CD4-positive, alpha-beta T cell (primary cell): ENCODE measurements at regions of chr11 and their contacts with region 1.

Region 1: GRCh38 chr11:118227865-118228785 is 3.3 kb upstream of the JAML start:
- DNase-seq: peak in 4 of 14 experiments; percentile 35 to 79 (median 70)
- ATAC-seq: peak; percentile 13
- H3K4me3 ChIP-seq: no peak overlapping the region
- H3K4me3 Mint-ChIP-seq: peak overlapping the region; percentile 76
- H3K27ac ChIP-seq: peak overlapping the region; percentile 54 to 68
- H3K27ac Mint-ChIP-seq: no peak overlapping the region
- H3K4me1 ChIP-seq: peaks cover 60% of the 10 kb centered on the region
- H3K4me1 Mint-ChIP-seq: peaks cover 33% of the 10 kb centered on the region
- H3K27me3 ChIP-seq: no peaks in the 10 kb centered on the region
- H3K27me3 Mint-ChIP-seq: no peaks in the 10 kb centered on the region
- CTCF ChIP-seq: no peak

Region 2: DNA sequence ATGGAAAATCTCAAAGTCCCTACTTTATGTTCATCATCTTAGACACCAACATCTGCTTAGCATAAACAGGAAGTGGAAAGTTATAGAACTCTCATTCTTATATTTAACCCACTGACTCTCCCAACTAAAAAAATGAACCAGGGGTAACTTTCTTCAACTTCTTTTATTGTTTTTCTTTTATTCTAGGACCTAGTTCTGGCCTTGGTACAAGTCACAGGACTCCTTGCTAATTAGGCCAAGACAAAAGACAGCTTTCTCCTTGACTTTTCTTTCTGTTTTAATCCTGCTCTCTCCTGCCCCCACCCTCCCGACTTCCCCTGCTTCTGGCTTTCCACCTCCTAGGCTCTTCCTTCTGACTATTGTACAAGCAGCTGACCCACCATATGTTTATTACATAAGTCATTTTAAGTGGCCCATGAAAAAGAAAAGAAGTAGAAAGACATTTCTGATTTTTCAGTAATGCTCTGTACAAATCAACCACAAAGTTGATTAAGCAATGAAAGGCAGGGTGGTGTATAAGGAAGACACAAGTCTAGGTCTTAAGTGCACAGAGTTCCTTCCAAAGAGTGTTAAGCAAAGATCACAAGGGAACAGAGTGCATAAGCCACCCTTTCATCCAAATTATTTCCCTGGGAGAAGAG is 21.6 kb before region 1 on chr11:
- CTCF ChIA-PET with region 1: interaction called, 3 read pairs
- POLR2A ChIA-PET with region 1: interaction called, 13 read pairs
- intact Hi-C with region 1: loop called in 1 of 2 experiments (anchors 2 kb)
- DNase-seq: peak in 1 of 14 experiments; percentile 49
- ATAC-seq: no peak
- H3K4me3 ChIP-seq: no peak overlapping the region
- H3K4me3 Mint-ChIP-seq: peak overlapping the region; percentile 75
- H3K27ac ChIP-seq: peak overlapping the region in 1 of 2 donors; percentile 15
- H3K27ac Mint-ChIP-seq: peak overlapping the region; percentile 74
- H3K4me1 ChIP-seq: peaks cover 54% of the 10 kb centered on the region
- H3K4me1 Mint-ChIP-seq: peaks cover 8% of the 10 kb centered on the region
- H3K27me3 ChIP-seq: no peaks in the 10 kb centered on the region
- H3K27me3 Mint-ChIP-seq: no peaks in the 10 kb centered on the region
- CTCF ChIP-seq: no peak

Region 3: DNA sequence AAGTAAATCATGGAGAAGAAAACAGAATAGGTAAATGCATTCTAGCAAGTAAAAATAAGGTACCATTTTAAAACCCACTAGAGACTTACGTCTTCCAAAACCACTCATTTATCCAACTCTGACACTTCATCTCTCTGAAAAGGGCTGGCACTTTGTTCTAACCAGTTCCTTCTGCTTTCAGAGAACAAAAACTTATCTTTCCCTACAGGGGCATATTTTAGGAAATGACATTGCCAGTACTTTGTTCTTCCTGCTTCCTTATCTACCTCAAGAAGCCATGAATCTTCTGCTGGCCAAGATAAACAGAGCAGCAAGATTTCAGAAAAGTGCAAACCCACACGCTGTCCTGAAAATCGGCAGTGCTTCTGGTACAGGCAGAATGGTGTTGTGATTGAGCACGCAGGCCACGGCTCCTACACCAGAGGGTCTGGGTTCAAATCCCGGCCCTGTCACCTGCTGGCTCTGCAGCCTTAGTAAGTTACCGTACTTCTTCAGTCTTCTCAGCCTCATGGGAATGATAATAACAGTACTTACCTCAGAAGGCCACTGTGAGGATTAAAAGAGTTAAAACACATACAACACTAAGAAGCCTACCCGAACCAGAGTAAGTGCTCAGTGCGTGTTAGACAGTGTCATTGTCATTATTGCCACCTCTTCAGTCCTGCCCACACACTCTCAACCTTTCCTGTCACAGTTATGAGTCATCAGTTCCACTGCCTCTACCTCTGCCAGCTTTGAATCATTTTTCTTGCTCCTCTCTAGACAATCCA is 13.1 kb after region 1 on chr11:
- CTCF ChIA-PET with region 1: interaction called, 6 read pairs
- POLR2A ChIA-PET with region 1: interaction called, 78 read pairs
- intact Hi-C with region 1: loop called (anchors 2 kb)
- DNase-seq: peak in 11 of 14 experiments; percentile 22 to 90 (median 55)
- ATAC-seq: peak; percentile 96
- H3K4me3 ChIP-seq: peak overlapping the region; percentile 21
- H3K4me3 Mint-ChIP-seq: peak overlapping the region; percentile 71
- H3K27ac ChIP-seq: peak overlapping the region; percentile 42 to 79
- H3K27ac Mint-ChIP-seq: peak overlapping the region; percentile 89
- H3K4me1 ChIP-seq: peaks cover 49% of the 10 kb centered on the region
- H3K4me1 Mint-ChIP-seq: peaks cover 70% of the 10 kb centered on the region
- H3K27me3 ChIP-seq: no peaks in the 10 kb centered on the region
- H3K27me3 Mint-ChIP-seq: no peaks in the 10 kb centered on the region
- CTCF ChIP-seq: no peak

Region 4: DNA sequence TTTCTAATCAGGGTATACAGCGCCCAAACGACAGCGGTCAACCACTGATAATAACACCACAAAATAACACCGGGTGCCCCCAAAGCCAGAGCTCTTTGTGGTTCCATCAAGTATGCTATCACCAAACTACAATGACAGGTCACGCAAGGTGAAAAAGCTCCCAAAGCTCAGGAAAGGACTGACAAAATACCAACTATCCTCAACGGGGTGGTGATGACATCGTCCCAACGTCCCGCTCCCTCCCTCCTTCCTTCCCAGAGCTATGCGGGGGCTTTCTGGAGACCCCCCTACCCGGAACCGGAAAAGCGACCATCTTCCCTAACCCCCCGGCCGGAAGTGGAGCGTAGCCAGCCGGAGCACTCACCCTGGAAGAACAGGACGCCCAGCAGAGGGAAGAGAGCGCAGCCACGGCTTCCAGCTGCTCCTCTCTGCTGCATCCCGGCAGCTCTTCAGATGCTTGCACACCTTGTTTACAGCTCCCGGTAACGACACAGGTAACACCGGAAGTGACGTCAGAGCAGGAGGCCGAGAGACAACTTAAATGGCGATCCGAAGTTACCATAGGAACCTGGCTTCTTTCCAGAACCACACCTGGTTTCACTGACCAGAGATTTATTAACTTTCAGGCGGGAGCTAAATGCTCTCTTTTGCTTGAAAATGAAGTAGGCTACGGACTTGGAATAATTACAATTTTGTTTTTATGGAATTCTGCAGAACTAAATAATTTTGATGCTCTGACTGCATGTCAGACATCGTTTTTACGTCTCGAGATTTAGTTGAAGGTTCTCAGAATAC is 23.9 kb after region 1 on chr11 and contains the start of gene MPZL3:
- CTCF ChIA-PET with region 1: interaction called, 7 read pairs
- POLR2A ChIA-PET with region 1: interaction called, 49 read pairs
- intact Hi-C with region 1: loop called (anchors 1 to 2 kb)
- DNase-seq: peak; percentile 72 to 96 (median 79)
- ATAC-seq: peak; percentile 86
- H3K4me3 ChIP-seq: peak within 1 kb of the TSS; percentile 79
- H3K4me3 Mint-ChIP-seq: peak within 1 kb of the TSS; percentile 96
- H3K27ac ChIP-seq: peak within 1 kb of the TSS; percentile 91 to 94
- H3K27ac Mint-ChIP-seq: peak within 1 kb of the TSS; percentile 98
- H3K4me1 ChIP-seq: peaks cover 13% of the 10 kb centered on the region
- H3K4me1 Mint-ChIP-seq: peaks cover 49% of the 10 kb centered on the region
- H3K27me3 ChIP-seq: no peaks in the 10 kb centered on the region
- H3K27me3 Mint-ChIP-seq: no peaks in the 10 kb centered on the region
- CTCF ChIP-seq: no peak
- total RNA-seq, gene MPZL3: 29.0 to 30.2 TPM

Region 5: GRCh38 chr11:118295834-118296454 is 67.8 kb after region 1 on chr11:
- CTCF ChIA-PET with region 1: interaction called, 5 read pairs
- POLR2A ChIA-PET with region 1: interaction called, 13 read pairs
- intact Hi-C with region 1: no loop called
- DNase-seq: peak in 12 of 14 experiments; percentile 23 to 81 (median 45)
- ATAC-seq: peak; percentile 85
- H3K4me3 ChIP-seq: no peak overlapping the region
- H3K4me3 Mint-ChIP-seq: no peak overlapping the region
- H3K27ac ChIP-seq: no peak overlapping the region
- H3K27ac Mint-ChIP-seq: peak overlapping the region; percentile 29
- H3K4me1 ChIP-seq: peaks cover 12% of the 10 kb centered on the region
- H3K4me1 Mint-ChIP-seq: peaks cover 36% of the 10 kb centered on the region
- H3K27me3 ChIP-seq: no peaks in the 10 kb centered on the region
- H3K27me3 Mint-ChIP-seq: no peaks in the 10 kb centered on the region
- CTCF ChIP-seq: peak; percentile 76

Region 6: DNA sequence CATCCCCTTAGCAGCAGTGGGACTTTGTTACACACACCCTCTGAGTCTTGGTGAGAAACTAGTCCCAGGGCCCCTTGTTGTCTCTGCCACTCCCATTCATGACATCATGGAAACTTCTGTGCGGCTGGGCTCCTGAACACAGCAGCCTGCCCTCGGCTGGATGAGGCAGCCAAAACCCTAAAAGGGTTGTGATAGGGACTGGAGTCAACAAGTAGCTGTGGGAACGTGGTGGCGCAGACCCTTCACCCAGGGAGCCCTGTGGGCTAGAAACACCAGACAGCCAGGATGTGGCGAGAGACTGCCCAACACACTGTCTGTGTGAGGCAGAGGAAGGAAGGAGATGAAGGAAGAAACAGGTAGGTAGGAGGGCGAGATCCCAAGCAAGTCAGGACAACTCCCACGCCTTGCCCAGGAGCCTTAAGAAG is 110.5 kb after region 1 on chr11:
- CTCF ChIA-PET with region 1: no interaction called
- POLR2A ChIA-PET with region 1: interaction called, 9 read pairs
- intact Hi-C with region 1: loop called in 1 of 2 experiments (anchors 2 kb)
- DNase-seq: peak; percentile 61 to 96 (median 86)
- ATAC-seq: peak; percentile 66
- H3K4me3 ChIP-seq: peak overlapping the region; percentile 86
- H3K4me3 Mint-ChIP-seq: peak overlapping the region; percentile 97
- H3K27ac ChIP-seq: peak overlapping the region; percentile 90
- H3K27ac Mint-ChIP-seq: peak overlapping the region; percentile 98
- H3K4me1 ChIP-seq: peaks cover 62% of the 10 kb centered on the region
- H3K4me1 Mint-ChIP-seq: peaks cover 70% of the 10 kb centered on the region
- H3K27me3 ChIP-seq: no peaks in the 10 kb centered on the region
- H3K27me3 Mint-ChIP-seq: no peaks in the 10 kb centered on the region
- CTCF ChIP-seq: no peak